Sigmoid colon (tissue), 7 donors: ENCODE measurements at regions of chr2 and their contacts with region 1.

Region 1: GRCh38 chr2:189096769-189097447 is 82.7 kb downstream of the COL5A2 start:
- DNase-seq: no peak
- H3K4me3 ChIP-seq: no peak overlapping the region
- H3K27ac ChIP-seq: peak overlapping the region in 3 of 4 donors; percentile 38 to 67 (median 65)
- H3K4me1 ChIP-seq: peaks cover 0 to 58% (median 44%) of the 10 kb centered on the region in 4 donors
- H3K27me3 ChIP-seq: no peaks in the 10 kb centered on the region
- CTCF ChIP-seq: no peak
- EP300 ChIP-seq: no peak
- POLR2A ChIP-seq: no peak

Region 2: DNA sequence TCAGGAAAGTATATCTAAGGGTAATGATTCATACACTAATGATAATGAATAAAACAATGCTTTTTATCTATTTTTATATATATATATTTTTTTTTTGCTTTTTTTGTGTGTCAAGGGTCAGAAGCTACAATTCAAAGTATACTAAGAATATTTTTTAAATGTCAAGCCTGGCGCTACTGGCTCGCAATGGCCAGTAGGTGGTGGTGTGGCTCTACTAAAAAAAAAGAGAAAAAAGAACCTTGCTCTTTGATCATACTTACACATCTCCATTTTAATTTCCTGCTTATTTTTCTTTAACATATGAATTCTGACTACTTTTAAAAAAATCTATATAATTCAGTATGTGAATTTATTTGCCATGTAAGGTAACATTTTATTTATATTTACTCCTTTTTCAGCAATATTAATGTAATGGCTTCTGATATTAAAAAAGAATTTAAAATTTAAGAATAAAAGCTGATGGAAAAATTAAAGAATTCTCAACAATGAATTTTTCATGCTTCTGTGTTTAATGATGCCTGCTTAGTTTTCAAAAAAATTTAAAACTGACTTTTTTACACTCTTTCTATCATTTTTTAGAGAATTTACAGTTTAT is 572.3 kb before region 1 on chr2:
- intact Hi-C with region 1: loop called (anchors 10 kb)
- DNase-seq: no peak
- H3K4me3 ChIP-seq: no peak overlapping the region
- H3K27ac ChIP-seq: peak overlapping the region in 2 of 4 donors; percentile 69 to 73
- H3K4me1 ChIP-seq: peaks cover 0 to 53% (median 31%) of the 10 kb centered on the region in 4 donors
- H3K27me3 ChIP-seq: no peaks in the 10 kb centered on the region
- CTCF ChIP-seq: peak; percentile 15 to 83 (median 45)
- EP300 ChIP-seq: no peak
- POLR2A ChIP-seq: no peak

Region 3: GRCh38 chr2:188693108-188693507 is 403.8 kb before region 1 on chr2:
- intact Hi-C with region 1: no loop called
- DNase-seq: no peak
- H3K4me3 ChIP-seq: no peak overlapping the region
- H3K27ac ChIP-seq: no peak overlapping the region
- H3K4me1 ChIP-seq: peaks cover 0 to 7% (median 3%) of the 10 kb centered on the region in 4 donors
- H3K27me3 ChIP-seq: no peaks in the 10 kb centered on the region
- CTCF ChIP-seq: no peak
- EP300 ChIP-seq: no peak
- POLR2A ChIP-seq: no peak

Region 4: DNA sequence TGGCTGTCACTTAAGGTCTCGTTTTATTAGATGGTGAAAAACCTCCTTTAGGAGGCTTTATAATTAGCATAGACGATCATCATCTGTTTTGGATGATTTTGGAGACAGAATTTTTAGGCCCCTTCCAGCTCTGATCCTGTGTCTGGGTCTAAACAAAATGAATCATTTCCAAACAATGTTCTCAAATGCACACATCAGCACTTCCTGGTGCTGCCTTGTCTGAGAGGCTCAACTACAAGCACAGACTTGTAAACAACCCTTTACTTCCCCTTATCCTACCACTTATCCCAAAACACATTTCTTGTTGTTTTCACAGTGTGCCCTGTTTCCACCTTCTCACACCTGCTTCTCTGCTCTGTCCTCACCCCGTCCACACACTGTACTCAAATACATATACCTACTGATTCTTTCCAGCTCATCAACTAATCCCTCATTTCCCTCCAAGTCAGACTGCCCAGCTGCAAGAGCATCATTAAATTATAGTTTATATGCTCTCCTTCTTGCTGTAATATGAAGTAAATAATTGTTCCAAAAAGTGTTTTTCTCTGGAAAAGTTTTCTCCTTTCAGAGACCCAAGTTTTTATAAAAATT is 193.9 kb before region 1 on chr2:
- intact Hi-C with region 1: no loop called
- DNase-seq: no peak
- H3K4me3 ChIP-seq: no peak overlapping the region
- H3K27ac ChIP-seq: no peak overlapping the region
- H3K4me1 ChIP-seq: peaks cover 0 to 6% (median 4%) of the 10 kb centered on the region in 4 donors
- H3K27me3 ChIP-seq: no peaks in the 10 kb centered on the region
- CTCF ChIP-seq: no peak
- EP300 ChIP-seq: no peak
- POLR2A ChIP-seq: no peak

Region 5: GRCh38 chr2:188937228-188938220 is 159.4 kb before region 1 on chr2:
- intact Hi-C with region 1: no loop called
- DNase-seq: no peak
- H3K4me3 ChIP-seq: no peak overlapping the region
- H3K27ac ChIP-seq: peak overlapping the region; percentile 38 to 57 (median 52)
- H3K4me1 ChIP-seq: peaks cover 0 to 7% (median 0%) of the 10 kb centered on the region in 4 donors
- H3K27me3 ChIP-seq: no peaks in the 10 kb centered on the region
- CTCF ChIP-seq: no peak
- EP300 ChIP-seq: no peak
- POLR2A ChIP-seq: no peak

Region 6: GRCh38 chr2:188966079-188966571 is 130.8 kb before region 1 on chr2:
- intact Hi-C with region 1: no loop called
- DNase-seq: no peak
- H3K4me3 ChIP-seq: no peak overlapping the region
- H3K27ac ChIP-seq: peak overlapping the region; percentile 24 to 58 (median 40)
- H3K4me1 ChIP-seq: peaks cover 0 to 44% (median 29%) of the 10 kb centered on the region in 4 donors
- H3K27me3 ChIP-seq: no peaks in the 10 kb centered on the region
- CTCF ChIP-seq: no peak
- EP300 ChIP-seq: no peak
- POLR2A ChIP-seq: no peak

Region 7: DNA sequence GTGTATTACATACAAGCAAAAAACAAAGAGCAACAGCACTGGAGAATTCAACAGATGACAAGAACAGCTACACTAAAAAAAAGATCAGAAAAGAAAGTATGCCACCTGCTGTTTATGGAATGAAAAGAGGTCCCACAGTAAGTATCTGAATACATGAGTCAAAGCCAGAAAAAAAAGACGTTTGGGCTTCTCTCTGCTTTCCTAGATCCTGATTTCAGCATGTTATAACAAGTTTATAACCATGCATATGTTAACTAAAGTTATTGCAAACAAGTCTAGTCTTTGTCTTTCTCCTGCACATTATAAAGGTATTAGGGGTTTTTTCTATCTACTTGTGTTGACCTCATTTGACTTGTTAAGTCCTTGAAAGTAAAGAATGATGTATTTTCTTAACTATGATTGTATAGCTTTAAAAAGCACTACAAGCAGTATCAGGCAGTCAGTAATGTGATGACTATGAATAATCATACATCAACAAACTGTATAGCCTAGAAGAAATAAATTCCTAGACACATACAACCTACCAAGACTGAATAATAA is 191.1 kb after region 1 on chr2:
- intact Hi-C with region 1: loop called (anchors 2 kb)
- DNase-seq: no peak
- H3K4me3 ChIP-seq: no peak overlapping the region
- H3K27ac ChIP-seq: peak overlapping the region in 2 of 4 donors; percentile 37 to 67
- H3K4me1 ChIP-seq: peaks cover 0 to 34% (median 25%) of the 10 kb centered on the region in 4 donors
- H3K27me3 ChIP-seq: no peaks in the 10 kb centered on the region
- CTCF ChIP-seq: peak; percentile 38 to 52 (median 50)
- EP300 ChIP-seq: no peak
- POLR2A ChIP-seq: no peak

Region 8: DNA sequence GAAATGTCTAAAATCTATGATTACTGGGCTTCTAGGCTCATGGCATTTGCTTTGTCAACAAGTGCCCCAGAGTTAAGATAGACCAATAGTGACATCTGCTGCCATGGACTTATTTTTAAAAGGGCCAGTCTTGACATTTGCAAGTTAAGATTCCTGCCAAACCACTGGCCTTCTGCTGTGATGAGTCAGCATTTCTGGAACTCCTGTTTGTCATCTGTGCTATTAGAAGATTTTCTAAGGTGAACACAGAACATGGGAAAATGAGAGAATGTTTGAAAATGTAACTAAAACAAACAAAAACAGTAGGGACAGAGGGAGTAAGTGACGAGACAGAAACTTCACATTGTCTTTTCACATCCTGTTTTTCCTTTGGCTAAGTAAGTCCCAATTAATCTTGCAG is 250.6 kb after region 1 on chr2:
- intact Hi-C with region 1: loop called (anchors 5 kb)
- DNase-seq: no peak
- H3K4me3 ChIP-seq: no peak overlapping the region
- H3K27ac ChIP-seq: peak overlapping the region; percentile 46 to 78 (median 70)
- H3K4me1 ChIP-seq: peaks cover 0 to 62% (median 49%) of the 10 kb centered on the region in 4 donors
- H3K27me3 ChIP-seq: no peaks in the 10 kb centered on the region
- CTCF ChIP-seq: no peak
- EP300 ChIP-seq: no peak
- POLR2A ChIP-seq: no peak